Activated B cell treated with CpG ODN at 0.5 μM for 24 hours (primary cell): ENCODE measurements at regions of chr16 and their contacts with region 1.

Region 1: DNA sequence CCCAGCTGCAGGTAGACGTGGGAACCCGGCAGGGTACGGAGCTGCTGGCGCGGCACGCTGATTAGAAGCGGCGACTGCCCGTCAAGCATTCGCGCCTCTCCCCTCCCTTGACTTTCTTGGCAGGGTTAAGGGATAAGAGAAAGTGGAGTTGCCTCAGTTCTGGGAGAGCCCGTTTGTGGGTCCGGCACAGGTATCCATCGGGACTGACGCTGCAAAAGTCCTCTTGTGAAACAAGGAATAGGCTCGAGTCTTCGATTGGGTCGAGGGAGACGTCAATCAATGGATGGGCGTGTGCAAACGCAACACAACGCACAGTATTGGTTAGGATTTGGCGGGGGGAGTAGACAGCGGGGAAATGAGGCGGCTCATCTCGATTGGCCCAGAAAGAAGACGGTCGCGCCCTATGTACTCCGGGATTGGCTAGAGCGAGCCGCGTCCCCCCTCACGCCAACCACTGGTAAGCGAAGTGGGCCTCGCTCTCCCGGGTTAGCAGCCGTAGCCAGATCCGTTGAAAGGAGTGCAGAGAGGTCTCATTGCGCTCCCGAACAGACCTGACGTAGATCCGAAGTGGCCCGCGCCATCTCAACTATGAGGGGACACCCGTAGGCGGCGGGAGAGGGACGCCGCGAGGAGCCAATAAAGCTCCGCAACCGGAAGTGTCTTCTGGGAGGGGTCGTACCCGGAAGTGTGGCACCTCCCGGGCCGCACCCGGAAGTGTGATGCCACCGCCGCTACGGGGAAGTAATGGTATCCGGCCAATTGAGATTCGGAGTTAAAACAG is at the start of gene MON1B:
- DNase-seq: peak; percentile 83
- ATAC-seq: peak; percentile 96
- H3K4me3 Mint-ChIP-seq: peak within 1 kb of the TSS; percentile 99
- H3K27ac Mint-ChIP-seq: peak within 1 kb of the TSS; percentile 100
- H3K4me1 Mint-ChIP-seq: peaks cover 43% of the 10 kb centered on the region
- H3K27me3 Mint-ChIP-seq: no peaks in the 10 kb centered on the region
- CTCF ChIP-seq: no peak
- total RNA-seq, gene MON1B: 70.7 and 73.2 TPM in 2 replicates

Region 2: GRCh38 chr16:75379911-75380847 is 1810.5 kb before region 1 on chr16:
- CTCF ChIA-PET with region 1: no interaction called
- POLR2A ChIA-PET with region 1: no interaction called
- intact Hi-C with region 1: loop called (anchors 1 kb)
- DNase-seq: peak; percentile 37
- ATAC-seq: peak; percentile 97
- H3K4me3 Mint-ChIP-seq: peak overlapping the region; percentile 48
- H3K27ac Mint-ChIP-seq: no peak overlapping the region
- H3K4me1 Mint-ChIP-seq: peaks cover 28% of the 10 kb centered on the region
- H3K27me3 Mint-ChIP-seq: peaks cover 70% of the 10 kb centered on the region
- CTCF ChIP-seq: no peak

Region 3: DNA sequence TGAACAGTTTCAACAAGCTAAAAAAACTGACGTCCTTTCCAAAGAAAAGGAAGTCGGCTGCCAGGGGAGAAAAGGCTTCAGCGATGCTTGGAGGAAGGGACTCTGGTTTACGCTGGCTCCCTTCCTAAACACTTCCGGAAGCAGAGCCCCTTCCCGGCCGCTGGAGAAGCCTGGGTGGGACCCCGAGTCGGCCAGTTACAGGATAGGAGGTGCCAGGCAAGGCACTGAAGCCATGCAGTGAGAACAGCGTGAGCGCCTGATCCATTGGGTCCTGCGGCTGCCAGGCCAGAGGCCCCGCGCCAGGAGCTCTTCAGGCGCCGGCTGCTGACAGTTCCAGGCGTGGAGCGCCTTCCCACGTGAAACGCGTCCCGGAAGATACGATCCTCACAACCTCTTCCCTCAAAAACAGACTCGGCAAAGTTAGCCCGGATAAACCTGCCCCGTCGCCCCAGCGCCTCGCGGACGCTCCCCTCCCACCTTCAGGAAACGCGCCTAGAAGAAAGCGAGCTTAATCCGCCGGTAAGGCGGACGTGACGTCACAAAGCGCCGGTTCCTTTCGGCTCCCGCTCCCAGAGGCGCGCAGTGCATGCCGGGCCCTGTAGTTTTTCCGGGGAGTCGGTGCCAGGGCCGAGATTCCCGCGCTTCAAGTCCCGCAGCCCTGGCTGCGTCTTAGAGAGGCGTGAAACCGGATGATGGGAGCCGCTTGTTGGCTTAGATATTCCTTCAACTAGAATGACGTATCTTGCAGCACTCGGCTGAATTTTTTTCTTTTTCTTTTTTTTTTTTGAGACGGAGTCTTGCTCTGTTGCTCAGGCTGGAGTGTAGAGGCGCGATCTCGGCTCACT is 1567.7 kb before region 1 on chr16 and contains the start of gene ADAT1:
- CTCF ChIA-PET with region 1: no interaction called
- POLR2A ChIA-PET with region 1: interaction called, 3 read pairs
- intact Hi-C with region 1: loop called (anchors 2 kb)
- DNase-seq: peak; percentile 93
- ATAC-seq: peak; percentile 97
- H3K4me3 Mint-ChIP-seq: peak within 1 kb of the TSS; percentile 98
- H3K27ac Mint-ChIP-seq: peak within 1 kb of the TSS; percentile 95
- H3K4me1 Mint-ChIP-seq: peaks cover 22% of the 10 kb centered on the region
- H3K27me3 Mint-ChIP-seq: no peaks in the 10 kb centered on the region
- CTCF ChIP-seq: no peak
- total RNA-seq, gene ADAT1: 52.7 and 57.2 TPM in 2 replicates

Region 4: GRCh38 chr16:77059446-77059845 is 131.2 kb before region 1 on chr16:
- CTCF ChIA-PET with region 1: no interaction called
- POLR2A ChIA-PET with region 1: no interaction called
- intact Hi-C with region 1: no loop called
- DNase-seq: no peak
- ATAC-seq: no peak
- H3K4me3 Mint-ChIP-seq: no peak overlapping the region
- H3K27ac Mint-ChIP-seq: no peak overlapping the region
- H3K4me1 Mint-ChIP-seq: no peaks in the 10 kb centered on the region
- H3K27me3 Mint-ChIP-seq: no peaks in the 10 kb centered on the region
- CTCF ChIP-seq: no peak

Region 5: GRCh38 chr16:77236063-77236511 is 45.4 kb after region 1 on chr16:
- CTCF ChIA-PET with region 1: no interaction called
- POLR2A ChIA-PET with region 1: no interaction called
- intact Hi-C with region 1: loop called (anchors 1 kb)
- DNase-seq: peak; percentile 75
- ATAC-seq: peak; percentile 100
- H3K4me3 Mint-ChIP-seq: peak overlapping the region; percentile 50
- H3K27ac Mint-ChIP-seq: no peak overlapping the region
- H3K4me1 Mint-ChIP-seq: peaks cover 4% of the 10 kb centered on the region
- H3K27me3 Mint-ChIP-seq: peaks cover 10% of the 10 kb centered on the region
- CTCF ChIP-seq: peak; percentile 90

Region 6: GRCh38 chr16:78099372-78100161 is 908.9 kb after region 1 on chr16 and contains the start of gene WWOX:
- CTCF ChIA-PET with region 1: no interaction called
- POLR2A ChIA-PET with region 1: no interaction called
- intact Hi-C with region 1: loop called (anchors 1 kb)
- DNase-seq: peak; percentile 93
- ATAC-seq: peak; percentile 94
- H3K4me3 Mint-ChIP-seq: peak within 1 kb of the TSS; percentile 92
- H3K27ac Mint-ChIP-seq: peak within 1 kb of the TSS; percentile 92
- H3K4me1 Mint-ChIP-seq: peaks cover 15% of the 10 kb centered on the region
- H3K27me3 Mint-ChIP-seq: peaks cover 3% of the 10 kb centered on the region
- CTCF ChIP-seq: peak; percentile 23
- total RNA-seq, gene WWOX: 15.6 and 22.6 TPM in 2 replicates